Activated CD4-positive, alpha-beta memory T cell treated with anti-CD3 and anti-CD28 coated beads for 36 hours (primary cell): ENCODE measurements at regions of chr2 and their contacts with region 1.

Region 1: DNA sequence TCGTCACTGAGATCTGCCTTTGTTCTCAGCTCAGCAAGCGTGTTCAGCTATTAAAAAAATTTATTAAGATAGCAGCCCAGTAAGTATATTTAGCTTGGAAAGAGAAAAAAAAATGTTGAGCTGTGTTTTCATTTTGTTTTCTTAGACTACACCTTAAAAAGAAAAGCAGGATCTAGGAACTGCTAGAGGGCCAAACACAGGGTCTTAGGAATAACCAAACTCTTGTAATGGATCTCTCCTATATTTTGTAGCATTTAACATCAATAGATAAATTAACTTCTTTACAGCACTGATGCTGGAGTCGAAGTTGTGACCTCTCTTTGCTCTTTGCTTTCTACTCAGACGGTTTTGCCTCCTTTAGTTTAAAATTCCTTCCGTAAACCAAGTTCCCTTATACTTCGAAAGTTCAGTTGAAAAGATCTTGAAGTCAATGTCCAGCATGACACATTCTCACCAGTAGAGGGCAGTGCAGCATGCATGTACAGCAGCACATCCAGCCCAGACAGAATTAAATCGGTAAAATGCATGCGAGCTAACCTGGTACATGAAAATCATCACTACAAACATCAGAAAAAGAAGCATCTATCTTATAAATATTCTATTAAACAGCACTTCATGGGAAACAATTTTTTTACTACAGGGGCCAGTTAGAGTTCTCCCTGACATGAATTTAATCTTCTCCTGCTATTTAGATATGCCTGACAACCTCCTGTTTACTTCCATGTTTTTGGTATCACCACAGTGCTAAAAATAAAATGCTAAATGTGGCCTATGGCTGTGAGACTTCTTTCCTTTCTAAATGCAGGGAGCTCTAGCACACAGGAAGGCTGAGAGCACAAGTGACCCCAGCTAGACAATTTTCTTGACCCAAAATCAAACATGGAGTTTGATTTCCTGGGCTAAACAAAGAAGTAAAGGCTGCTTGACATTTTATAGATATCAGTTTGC is 48.2 kb upstream of the MAP3K20 start:
- DNase-seq: peak; percentile 78
- H3K4me3 Mint-ChIP-seq: no peak overlapping the region
- H3K27ac Mint-ChIP-seq: no peak overlapping the region
- H3K4me1 Mint-ChIP-seq: no peaks in the 10 kb centered on the region
- H3K27me3 Mint-ChIP-seq: peaks cover 19% of the 10 kb centered on the region

Region 2: GRCh38 chr2:173075781-173076580 is 48.5 kb after region 1 on chr2 and contains the start of gene MAP3K20:
- CTCF ChIA-PET with region 1: no interaction called
- POLR2A ChIA-PET with region 1: no interaction called
- intact Hi-C with region 1: loop called (anchors 2 kb)
- DNase-seq: peak; percentile 60
- H3K4me3 Mint-ChIP-seq: peak within 1 kb of the TSS; percentile 72
- H3K27ac Mint-ChIP-seq: no peak within 1 kb of the TSS
- H3K4me1 Mint-ChIP-seq: peaks cover 14% of the 10 kb centered on the region
- H3K27me3 Mint-ChIP-seq: peaks cover 34% of the 10 kb centered on the region
- total RNA-seq, gene MAP3K20: 6.5 to 7.0 TPM

Region 3: GRCh38 chr2:173134703-173135102 is 107.2 kb after region 1 on chr2:
- CTCF ChIA-PET with region 1: interaction called, 16 read pairs
- POLR2A ChIA-PET with region 1: no interaction called
- intact Hi-C with region 1: no loop called
- DNase-seq: peak; percentile 20
- H3K4me3 Mint-ChIP-seq: no peak overlapping the region
- H3K27ac Mint-ChIP-seq: no peak overlapping the region
- H3K4me1 Mint-ChIP-seq: peaks cover 41% of the 10 kb centered on the region
- H3K27me3 Mint-ChIP-seq: peaks cover 46% of the 10 kb centered on the region

Region 4: GRCh38 chr2:173210270-173211196 is 183.1 kb after region 1 on chr2:
- CTCF ChIA-PET with region 1: interaction called, 392 read pairs
- POLR2A ChIA-PET with region 1: no interaction called
- intact Hi-C with region 1: loop called (anchors 1 kb)
- DNase-seq: peak; percentile 58
- H3K4me3 Mint-ChIP-seq: no peak overlapping the region
- H3K27ac Mint-ChIP-seq: no peak overlapping the region
- H3K4me1 Mint-ChIP-seq: no peaks in the 10 kb centered on the region
- H3K27me3 Mint-ChIP-seq: peaks cover 8% of the 10 kb centered on the region

Region 5: GRCh38 chr2:173354601-173355131 is 327.2 kb after region 1 on chr2 and contains the start of gene CDCA7:
- CTCF ChIA-PET with region 1: interaction called, 5 read pairs
- POLR2A ChIA-PET with region 1: no interaction called
- intact Hi-C with region 1: loop called (anchors 5 kb)
- DNase-seq: peak; percentile 78
- H3K4me3 Mint-ChIP-seq: peak within 1 kb of the TSS; percentile 84
- H3K27ac Mint-ChIP-seq: peak within 1 kb of the TSS; percentile 93
- H3K4me1 Mint-ChIP-seq: peaks cover 41% of the 10 kb centered on the region
- H3K27me3 Mint-ChIP-seq: peaks cover 47% of the 10 kb centered on the region
- total RNA-seq, gene CDCA7: 59.9 to 64.1 TPM

Region 6: DNA sequence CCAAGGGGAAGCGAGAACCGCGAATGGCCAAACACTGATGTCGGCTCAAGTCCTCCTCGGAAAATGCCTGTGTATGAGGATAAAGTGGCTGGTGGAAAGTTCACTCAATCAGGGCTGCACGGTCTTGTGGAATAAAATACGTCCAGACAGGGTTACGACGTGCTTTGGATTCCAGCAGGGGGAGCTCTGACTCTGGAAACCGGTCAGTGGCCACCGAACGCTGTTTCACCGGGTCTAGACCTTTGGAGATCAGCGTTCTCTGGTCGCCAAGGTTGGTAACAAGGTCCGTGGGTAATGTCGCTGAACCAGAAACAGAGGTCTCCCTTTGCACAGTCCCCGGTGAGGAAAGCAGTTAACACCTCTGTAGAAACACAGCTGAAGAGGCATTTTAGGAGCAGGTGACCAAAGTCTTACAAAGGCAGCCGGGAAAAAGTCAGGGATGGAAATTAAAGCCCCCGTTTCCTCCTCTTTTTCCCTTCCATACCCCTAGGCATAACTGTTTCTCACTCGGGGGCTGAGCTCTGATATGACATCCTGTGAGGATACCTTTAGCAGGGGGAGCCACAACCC is 375.0 kb after region 1 on chr2:
- CTCF ChIA-PET with region 1: interaction called, 13 read pairs
- POLR2A ChIA-PET with region 1: no interaction called
- intact Hi-C with region 1: loop called (anchors 2 kb)
- DNase-seq: peak; percentile 81
- H3K4me3 Mint-ChIP-seq: no peak overlapping the region
- H3K27ac Mint-ChIP-seq: no peak overlapping the region
- H3K4me1 Mint-ChIP-seq: peaks cover 4% of the 10 kb centered on the region
- H3K27me3 Mint-ChIP-seq: peaks cover 44% of the 10 kb centered on the region

Region 7: GRCh38 chr2:173448938-173449471 is 421.6 kb after region 1 on chr2:
- CTCF ChIA-PET with region 1: interaction called, 15 read pairs
- POLR2A ChIA-PET with region 1: no interaction called
- intact Hi-C with region 1: loop called (anchors 1 kb)
- DNase-seq: peak; percentile 82
- H3K4me3 Mint-ChIP-seq: peak overlapping the region; percentile 57
- H3K27ac Mint-ChIP-seq: no peak overlapping the region
- H3K4me1 Mint-ChIP-seq: peaks cover 16% of the 10 kb centered on the region
- H3K27me3 Mint-ChIP-seq: peaks cover 8% of the 10 kb centered on the region